Right lobe of liver (tissue), 6 donors: ENCODE measurements at regions of chr2 and their contacts with region 1.

Region 1: DNA sequence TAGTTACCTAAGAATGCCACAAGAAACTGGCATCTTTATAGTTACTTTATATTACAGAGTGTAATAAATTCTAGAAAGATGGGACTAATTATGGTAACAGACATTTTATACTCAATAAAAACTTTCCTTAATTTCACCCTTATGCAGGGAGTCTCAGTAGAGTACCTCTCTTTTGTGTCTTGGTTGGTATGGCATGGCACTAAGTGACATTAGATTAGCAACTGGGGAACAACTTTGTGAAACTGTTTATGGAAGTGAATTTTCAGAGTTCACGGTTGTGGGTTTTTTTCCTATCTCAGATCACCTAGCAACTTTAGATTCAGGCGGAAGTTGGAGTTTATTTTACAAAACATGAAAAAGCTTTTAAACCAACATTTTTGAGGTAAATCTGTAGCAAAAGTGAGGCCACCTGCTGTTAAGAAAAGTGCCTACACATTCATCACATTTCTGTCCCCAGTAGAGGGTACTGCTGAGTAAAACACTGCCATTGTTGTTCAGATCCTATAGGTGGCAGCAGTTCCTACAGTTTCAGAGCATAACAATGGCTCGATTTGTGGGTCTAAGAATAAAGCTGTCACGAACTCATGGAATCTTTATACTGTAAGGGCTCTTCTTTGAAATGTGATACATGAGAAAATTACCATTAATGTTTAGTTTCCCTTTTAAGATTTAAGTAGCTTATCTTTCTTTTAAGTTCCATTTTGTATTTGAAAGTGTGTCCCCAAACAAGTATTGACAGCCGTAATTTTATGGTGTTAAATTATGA is 117.6 kb downstream of the CAMKMT start:
- DNase-seq: peak in 1 of 3 donors; percentile 46
- ATAC-seq: peak; percentile 100
- H3K4me3 ChIP-seq: no peak overlapping the region
- H3K27ac ChIP-seq: no peak overlapping the region
- H3K4me1 ChIP-seq: peaks cover 0 to 5% (median 0%) of the 10 kb centered on the region in 4 donors
- H3K27me3 ChIP-seq: no peaks in the 10 kb centered on the region
- CTCF ChIP-seq: peak; percentile 99 to 100 (median 100)
- POLR2A ChIP-seq: no peak

Region 2: GRCh38 chr2:44377486-44377885 is 101.8 kb before region 1 on chr2:
- intact Hi-C with region 1: no loop called
- DNase-seq: no peak
- ATAC-seq: no peak
- H3K4me3 ChIP-seq: no peak overlapping the region
- H3K27ac ChIP-seq: no peak overlapping the region
- H3K4me1 ChIP-seq: no peaks in the 10 kb centered on the region
- H3K27me3 ChIP-seq: no peaks in the 10 kb centered on the region
- CTCF ChIP-seq: no peak
- POLR2A ChIP-seq: no peak

Region 3: GRCh38 chr2:44392338-44392943 is 86.9 kb before region 1 on chr2:
- intact Hi-C with region 1: loop called in 1 of 2 experiments (anchors 5 kb)
- DNase-seq: peak in 2 of 3 donors; percentile 23 to 54
- ATAC-seq: peak in 1 of 4 donors; percentile 44
- H3K4me3 ChIP-seq: no peak overlapping the region
- H3K27ac ChIP-seq: no peak overlapping the region
- H3K4me1 ChIP-seq: no peaks in the 10 kb centered on the region
- H3K27me3 ChIP-seq: no peaks in the 10 kb centered on the region
- CTCF ChIP-seq: peak; percentile 51 to 72 (median 62)
- POLR2A ChIP-seq: no peak

Region 4: GRCh38 chr2:44955593-44956392 is 476.5 kb after region 1 on chr2:
- intact Hi-C with region 1: loop called (anchors 5 to 10 kb)
- DNase-seq: peak; percentile 74 to 81 (median 78)
- ATAC-seq: peak; percentile 85 to 91 (median 90)
- H3K4me3 ChIP-seq: peak overlapping the region in 1 of 3 donors; percentile 3
- H3K27ac ChIP-seq: no peak overlapping the region
- H3K4me1 ChIP-seq: peaks cover 0 to 25% (median 2%) of the 10 kb centered on the region in 4 donors
- H3K27me3 ChIP-seq: peaks cover 0 to 13% of the 10 kb centered on the region in 2 donors
- CTCF ChIP-seq: peak; percentile 78 to 96 (median 90)
- POLR2A ChIP-seq: no peak